Activated T-helper 1 cell treated with anti-CD3 and anti-CD28 coated beads, Interleukin-12 subunit alpha, Interleukin-12 subunit beta, Interleukin-2, Interleukin-4 antibody, amounts not matched to agents 30 ng/mL and 10 ng/mL and 1 ng/mL, durations not matched to agents 14 hours and 24 hours and 36 hours (primary cell): ENCODE measurements at regions of chr16 and their contacts with region 1.

Region 1: DNA sequence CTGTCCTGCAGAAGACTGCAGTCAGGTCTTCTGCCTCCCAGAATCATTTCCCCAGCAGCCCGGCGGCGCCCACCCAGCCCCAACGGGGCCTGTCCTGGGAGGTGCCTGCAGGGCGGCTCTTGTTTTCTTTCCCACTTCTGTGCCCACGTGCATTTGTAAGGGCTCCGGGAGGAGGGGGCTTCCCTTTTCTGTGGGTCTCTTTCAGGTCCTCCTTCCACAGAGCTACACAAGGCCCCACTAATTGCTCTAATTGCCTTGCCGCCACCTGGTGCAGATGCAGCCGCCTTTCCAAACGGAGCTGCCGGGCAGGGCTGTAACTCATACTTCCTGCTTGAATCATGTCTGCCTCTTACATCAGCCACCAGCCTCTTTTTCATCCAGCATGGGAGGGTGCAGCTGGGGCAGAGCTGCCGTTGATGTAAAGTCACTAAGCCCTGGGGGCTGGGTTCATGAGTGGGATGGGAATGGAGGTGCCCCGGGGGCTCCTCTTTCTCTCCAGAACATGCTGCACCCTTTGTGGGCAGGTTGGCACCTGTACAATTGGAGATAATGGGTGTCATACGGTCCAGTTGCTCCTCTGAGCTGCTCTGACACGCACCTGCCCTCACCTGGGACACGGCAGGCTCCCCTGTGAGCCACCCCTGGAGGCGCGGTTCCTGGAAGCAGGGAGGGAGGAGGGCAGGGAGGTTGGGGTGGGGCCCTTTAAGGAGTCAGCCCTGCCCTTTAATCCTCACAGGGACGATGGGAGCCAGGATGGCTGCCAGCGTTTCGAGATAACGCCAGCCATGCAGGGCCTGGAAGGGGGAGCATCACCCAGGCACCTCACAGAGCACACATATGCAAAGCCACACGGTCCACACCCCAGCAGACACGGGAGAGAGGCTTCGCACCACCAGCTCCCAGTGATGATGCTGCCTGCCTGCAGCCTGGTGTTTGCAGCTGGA is 41.1 kb upstream of the KLHDC4 start:
- DNase-seq: peak; percentile 38
- H3K4me3 Mint-ChIP-seq: peak overlapping the region; percentile 87
- H3K27ac Mint-ChIP-seq: peak overlapping the region; percentile 90
- H3K4me1 Mint-ChIP-seq: peaks cover 38% of the 10 kb centered on the region
- H3K27me3 Mint-ChIP-seq: peaks cover 1% of the 10 kb centered on the region

Region 2: GRCh38 chr16:87723226-87723623 is 83.7 kb before region 1 on chr16:
- intact Hi-C with region 1: no loop called
- DNase-seq: no peak
- H3K4me3 Mint-ChIP-seq: no peak overlapping the region
- H3K27ac Mint-ChIP-seq: no peak overlapping the region
- H3K4me1 Mint-ChIP-seq: peaks cover 7% of the 10 kb centered on the region
- H3K27me3 Mint-ChIP-seq: no peaks in the 10 kb centered on the region

Region 3: DNA sequence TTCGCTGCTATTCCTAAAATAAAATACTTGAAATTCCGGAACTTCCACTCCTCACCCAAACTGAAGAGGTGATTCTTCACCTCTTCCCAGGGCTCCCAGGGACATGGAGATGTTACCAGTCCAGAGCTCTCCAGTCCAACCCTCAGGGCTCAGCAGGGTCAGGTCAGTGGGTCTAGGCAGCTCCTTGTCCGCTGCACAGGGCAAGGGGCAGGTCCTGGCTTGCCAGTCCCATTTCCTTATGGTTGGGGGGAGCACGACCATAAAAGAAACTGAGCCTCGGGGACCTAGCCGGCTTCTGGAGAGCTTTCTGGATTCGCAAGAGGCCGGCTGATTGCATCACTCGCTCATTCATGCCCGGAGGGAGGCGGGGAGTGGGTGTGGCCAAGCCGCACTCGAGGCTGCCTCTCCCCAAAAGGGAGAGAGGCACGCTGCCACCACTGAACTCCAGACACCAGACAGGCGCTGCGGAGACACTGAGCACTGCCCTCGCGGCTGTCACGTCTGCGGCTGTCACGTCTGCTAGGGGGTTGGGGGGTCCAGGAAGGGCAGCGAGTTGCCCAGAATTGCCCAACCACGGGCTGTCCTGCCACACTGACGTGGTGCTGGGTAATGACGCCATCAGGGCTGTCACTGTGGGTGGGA is 46.7 kb after region 1 on chr16:
- intact Hi-C with region 1: loop called (anchors 1 kb)
- DNase-seq: peak; percentile 83
- H3K4me3 Mint-ChIP-seq: peak overlapping the region; percentile 78
- H3K27ac Mint-ChIP-seq: peak overlapping the region; percentile 86
- H3K4me1 Mint-ChIP-seq: peaks cover 55% of the 10 kb centered on the region
- H3K27me3 Mint-ChIP-seq: no peaks in the 10 kb centered on the region